Aorta (tissue), 5 donors: ENCODE measurements at regions of chr10 and their contacts with region 1.

Region 1: GRCh38 chr10:97425964-97426775 is at the start of gene PGAM1:
- DNase-seq: peak; percentile 97 to 98
- ATAC-seq: peak; percentile 98
- H3K4me3 ChIP-seq: peak within 1 kb of the TSS; percentile 30 to 76
- H3K27ac ChIP-seq: peak within 1 kb of the TSS in 1 of 2 donors; percentile 64
- H3K4me1 ChIP-seq: peaks cover 0 to 6% of the 10 kb centered on the region in 2 donors
- H3K27me3 ChIP-seq: no peaks in the 10 kb centered on the region
- total RNA-seq, gene PGAM1: 145 to 148 TPM

Region 2: GRCh38 chr10:97445722-97446639 is 19.8 kb after region 1 on chr10 and contains the starts of genes EXOSC1 and ZDHHC16:
- intact Hi-C with region 1: loop called in 1 of 2 experiments (anchors 2 kb)
- DNase-seq: peak; percentile 94 to 96
- ATAC-seq: peak; percentile 99
- H3K4me3 ChIP-seq: peak within 1 kb of the TSS; percentile 89 to 92
- H3K27ac ChIP-seq: no peak within 1 kb of the TSS
- H3K4me1 ChIP-seq: peaks cover 7 to 8% of the 10 kb centered on the region in 2 donors
- H3K27me3 ChIP-seq: no peaks in the 10 kb centered on the region
- total RNA-seq, gene EXOSC1: 25.6 to 27.2 TPM
- total RNA-seq, gene ZDHHC16: 29.6 to 35.6 TPM